Gastrocnemius medialis (tissue), 4 donors: ENCODE measurements at regions of chr13 and their contacts with region 1.

Region 1: DNA sequence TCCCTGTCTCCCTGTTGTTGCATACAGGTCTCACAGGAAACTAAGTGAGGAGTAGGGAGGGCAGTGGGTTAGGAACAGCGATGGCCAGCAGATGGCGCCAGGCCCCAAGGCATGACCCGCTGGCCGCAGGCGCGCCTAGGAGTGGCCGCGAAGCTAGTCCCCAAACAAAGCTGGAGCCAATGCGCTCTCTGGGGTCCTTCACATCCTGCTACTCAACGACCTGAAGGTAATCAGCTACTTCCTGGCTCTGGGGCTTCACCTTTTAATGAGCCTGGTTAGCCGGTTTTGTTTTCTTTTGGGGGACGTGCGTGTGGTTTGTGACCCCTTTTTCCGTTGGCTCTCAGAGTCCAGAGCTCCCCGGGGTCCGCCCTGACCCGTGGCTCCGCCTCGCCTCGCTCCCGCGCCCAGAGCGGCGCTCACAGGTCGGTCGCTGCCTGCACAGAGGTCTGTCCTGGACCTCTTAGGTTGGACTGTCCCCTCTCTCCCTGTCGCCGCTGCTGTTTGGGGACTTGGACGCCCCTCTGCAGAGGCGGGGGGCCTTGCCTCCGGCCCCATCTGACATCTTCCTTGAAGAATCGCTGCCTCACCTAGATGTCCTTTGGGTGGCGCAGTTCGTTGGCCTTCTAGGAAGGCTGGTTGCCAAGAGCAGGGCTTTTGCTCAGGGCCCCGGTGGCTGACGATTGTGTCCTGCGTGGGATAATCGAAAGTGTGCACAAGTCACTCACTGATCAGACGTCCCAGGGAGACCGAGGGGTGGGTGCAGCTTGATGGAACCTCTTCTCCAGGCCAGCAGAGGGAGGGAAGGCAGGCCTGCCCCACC is 62.1 kb upstream of the GTF3A start:
- DNase-seq: peak; percentile 46 to 65
- ATAC-seq: peak; percentile 90 to 96
- H3K4me3 ChIP-seq: peak overlapping the region; percentile 48 to 63 (median 52)
- H3K27ac ChIP-seq: no peak overlapping the region
- H3K4me1 ChIP-seq: peaks cover 3 to 8% of the 10 kb centered on the region in 2 donors
- H3K27me3 ChIP-seq: peaks cover 0 to 3% (median 0%) of the 10 kb centered on the region in 3 donors
- CTCF ChIP-seq: peak; percentile 80 to 93 (median 90)
- POLR2A ChIP-seq: no peak

Region 2: GRCh38 chr13:27953676-27954405 is 591.6 kb after region 1 on chr13:
- in situ Hi-C with region 1: loop called in 1 of 4 experiments (anchors 10 kb)
- intact Hi-C with region 1: no loop called
- DNase-seq: peak in 1 of 2 donors; percentile 22
- ATAC-seq: peak; percentile 66 to 73
- H3K4me3 ChIP-seq: peak overlapping the region; percentile 40 to 67 (median 45)
- H3K27ac ChIP-seq: no peak overlapping the region
- H3K4me1 ChIP-seq: peaks cover 2 to 12% of the 10 kb centered on the region in 2 donors
- H3K27me3 ChIP-seq: peaks cover 62 to 75% (median 68%) of the 10 kb centered on the region in 3 donors
- CTCF ChIP-seq: peak; percentile 39 to 73 (median 56)
- POLR2A ChIP-seq: no peak

Region 3: GRCh38 chr13:27977476-27978300 is 615.4 kb after region 1 on chr13:
- in situ Hi-C with region 1: loop called in 3 of 4 experiments (anchors 10 kb)
- intact Hi-C with region 1: no loop called
- DNase-seq: no peak
- ATAC-seq: no peak
- H3K4me3 ChIP-seq: no peak overlapping the region
- H3K27ac ChIP-seq: no peak overlapping the region
- H3K4me1 ChIP-seq: peaks cover 7 to 10% of the 10 kb centered on the region in 2 donors
- H3K27me3 ChIP-seq: peaks cover 86 to 93% (median 92%) of the 10 kb centered on the region in 3 donors
- CTCF ChIP-seq: no peak
- POLR2A ChIP-seq: no peak

Region 4: DNA sequence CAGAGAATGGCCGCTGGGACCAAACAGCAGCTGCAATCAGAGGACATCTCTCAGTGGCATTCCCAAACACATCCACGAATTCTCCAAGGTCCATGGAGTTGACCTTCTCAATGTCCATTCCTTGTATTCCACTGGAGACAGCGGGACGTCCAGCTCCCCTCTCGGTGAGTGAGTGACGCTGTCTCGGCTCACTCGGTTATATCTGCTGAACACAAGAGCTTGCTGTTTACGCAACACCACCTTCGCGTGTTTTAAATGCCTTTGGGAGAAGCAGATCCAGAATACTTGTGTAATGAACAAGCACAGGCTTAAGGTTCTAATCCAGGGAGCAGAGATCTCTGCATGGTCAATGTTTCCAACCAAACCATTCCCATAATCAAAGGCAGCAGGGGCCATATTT is 626.2 kb after region 1 on chr13 and contains the start of gene URAD:
- in situ Hi-C with region 1: loop called (anchors 5 to 10 kb)
- intact Hi-C with region 1: loop called (anchors 1 kb)
- DNase-seq: no peak
- ATAC-seq: no peak
- H3K4me3 ChIP-seq: no peak within 1 kb of the TSS
- H3K27ac ChIP-seq: no peak within 1 kb of the TSS
- H3K4me1 ChIP-seq: no peaks in the 10 kb centered on the region
- H3K27me3 ChIP-seq: peaks cover 6 to 21% (median 12%) of the 10 kb centered on the region in 3 donors
- CTCF ChIP-seq: no peak
- POLR2A ChIP-seq: no peak
- total RNA-seq, gene URAD: not detected